H1 (cell line): ENCODE measurements at regions of chr9 and their contacts with region 1.

Region 1: DNA sequence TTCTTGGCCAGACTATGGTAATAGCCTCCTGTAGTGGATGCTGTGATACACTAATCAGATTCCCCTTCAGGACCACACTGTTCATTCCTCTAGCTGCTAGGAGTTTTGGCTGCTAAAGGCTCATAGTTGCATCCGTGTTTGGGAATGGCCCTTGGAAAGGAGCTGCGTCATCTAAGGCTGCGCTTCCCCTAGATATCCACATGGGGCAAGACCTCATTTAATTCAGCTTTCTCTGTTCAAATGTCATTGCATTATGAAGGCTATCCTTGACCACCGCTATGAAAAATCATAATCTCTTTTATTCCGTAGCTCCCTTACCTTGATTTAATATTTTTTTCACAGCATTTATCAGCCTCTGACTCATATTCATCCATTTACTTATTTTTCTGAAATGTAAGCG is 258.3 kb upstream of the NR4A3 start:
- DNase-seq: no peak
- H3K4me3 ChIP-seq: no peak overlapping the region
- H3K27ac ChIP-seq: no peak overlapping the region
- H3K4me1 ChIP-seq: no peaks in the 10 kb centered on the region
- H3K27me3 ChIP-seq: no peaks in the 10 kb centered on the region
- CTCF ChIP-seq: peak in 2 of 3 experiments; percentile 2 to 28; a peak in 2 of 4 replicates
- EP300 ChIP-seq: no peak
- POLR2A ChIP-seq: no peak
- RAD21 ChIP-seq: peak in 1 of 2 experiments; percentile 26; a peak in 2 of 4 replicates

Region 2: DNA sequence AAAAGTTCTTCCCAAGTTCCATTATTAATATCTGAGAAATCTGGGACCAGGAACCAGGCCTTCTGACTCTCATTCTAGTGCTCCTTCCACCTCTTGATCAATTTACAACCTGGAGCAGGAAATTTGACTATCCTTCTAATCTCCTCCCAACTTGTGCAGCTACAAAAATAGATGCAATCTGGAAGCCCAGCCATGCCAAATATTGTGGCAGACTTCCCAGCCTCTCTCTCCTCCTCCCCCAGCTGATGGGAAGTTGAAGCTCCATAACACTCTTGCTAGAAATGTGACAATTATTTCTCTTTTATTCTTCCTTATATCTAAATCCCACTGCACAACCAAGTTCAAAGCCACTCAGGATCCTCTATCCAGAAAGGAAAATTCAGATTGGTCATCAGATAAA is 89.2 kb before region 1 on chr9:
- CTCF ChIA-PET with region 1: no interaction called
- POLR2A ChIA-PET with region 1: no interaction called
- DNase-seq: no peak
- H3K4me3 ChIP-seq: no peak overlapping the region
- H3K27ac ChIP-seq: no peak overlapping the region
- H3K4me1 ChIP-seq: peaks cover 0 to 5% (median 2%) of the 10 kb centered on the region in 4 experiments; a peak in 2 of 7 replicates
- H3K27me3 ChIP-seq: no peaks in the 10 kb centered on the region
- CTCF ChIP-seq: no peak
- EP300 ChIP-seq: no peak
- POLR2A ChIP-seq: no peak
- RAD21 ChIP-seq: no peak

Region 3: DNA sequence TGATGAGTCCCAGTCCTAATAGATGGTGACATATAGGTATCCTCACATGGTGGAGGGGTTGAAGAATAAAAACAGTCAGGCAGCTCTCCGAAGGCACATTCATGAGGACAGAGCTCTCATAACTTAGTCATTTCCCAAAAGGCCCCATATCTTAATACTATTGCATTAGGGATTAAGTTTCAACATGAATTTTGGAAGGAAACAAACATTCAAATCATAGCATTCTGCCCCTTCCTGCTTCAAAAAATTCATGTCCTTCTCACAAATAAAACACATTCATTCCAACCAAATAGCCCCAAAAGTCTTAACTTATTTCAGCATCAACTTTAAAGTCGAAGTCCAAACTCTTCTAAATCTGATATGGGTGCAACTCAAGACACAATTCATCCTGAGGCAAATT is 18.8 kb before region 1 on chr9:
- CTCF ChIA-PET with region 1: interaction called, 11 read pairs
- POLR2A ChIA-PET with region 1: no interaction called
- DNase-seq: no peak
- H3K4me3 ChIP-seq: no peak overlapping the region
- H3K27ac ChIP-seq: no peak overlapping the region
- H3K4me1 ChIP-seq: no peaks in the 10 kb centered on the region
- H3K27me3 ChIP-seq: no peaks in the 10 kb centered on the region
- CTCF ChIP-seq: no peak
- EP300 ChIP-seq: no peak
- POLR2A ChIP-seq: no peak
- RAD21 ChIP-seq: no peak

Region 4: DNA sequence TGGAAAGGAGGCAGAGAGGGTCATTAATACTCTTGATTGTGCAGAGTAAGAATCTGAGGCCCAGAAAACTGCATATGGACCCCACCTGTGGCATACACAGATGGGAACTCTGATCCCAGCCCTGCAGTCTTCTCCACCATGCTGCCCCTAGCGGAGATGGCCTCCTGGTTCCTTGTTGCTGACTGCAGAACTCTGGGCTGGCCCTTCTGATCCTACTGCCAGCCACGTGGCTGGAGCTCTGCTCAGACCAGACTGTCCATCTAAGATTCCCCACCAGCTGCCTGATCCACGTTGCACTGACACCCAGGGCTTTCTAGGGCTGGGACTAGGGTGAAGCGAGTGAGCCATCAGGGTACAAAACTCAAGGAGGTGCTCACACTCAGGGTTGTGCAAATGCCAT is 12.6 kb after region 1 on chr9:
- CTCF ChIA-PET with region 1: interaction called, 21 read pairs
- POLR2A ChIA-PET with region 1: interaction called, 3 read pairs
- DNase-seq: no peak
- H3K4me3 ChIP-seq: no peak overlapping the region
- H3K27ac ChIP-seq: no peak overlapping the region
- H3K4me1 ChIP-seq: no peaks in the 10 kb centered on the region
- H3K27me3 ChIP-seq: no peaks in the 10 kb centered on the region
- CTCF ChIP-seq: peak in 2 of 3 experiments; percentile 10 to 22; a peak in 2 of 4 replicates
- EP300 ChIP-seq: no peak
- POLR2A ChIP-seq: no peak
- RAD21 ChIP-seq: peak in 1 of 2 experiments; percentile 27; a peak in 1 of 4 replicates

Region 5: GRCh38 chr9:99693888-99694287 is 130.5 kb after region 1 on chr9:
- CTCF ChIA-PET with region 1: no interaction called
- POLR2A ChIA-PET with region 1: no interaction called
- DNase-seq: no peak
- H3K4me3 ChIP-seq: no peak overlapping the region
- H3K27ac ChIP-seq: no peak overlapping the region
- H3K4me1 ChIP-seq: no peaks in the 10 kb centered on the region
- H3K27me3 ChIP-seq: no peaks in the 10 kb centered on the region
- CTCF ChIP-seq: no peak
- EP300 ChIP-seq: no peak
- POLR2A ChIP-seq: no peak
- RAD21 ChIP-seq: no peak

Region 6: GRCh38 chr9:99851500-99851822 is 288.1 kb after region 1 on chr9:
- CTCF ChIA-PET with region 1: no interaction called
- POLR2A ChIA-PET with region 1: no interaction called
- DNase-seq: no peak
- H3K4me3 ChIP-seq: no peak overlapping the region
- H3K27ac ChIP-seq: no peak overlapping the region
- H3K4me1 ChIP-seq: no peaks in the 10 kb centered on the region
- H3K27me3 ChIP-seq: no peaks in the 10 kb centered on the region
- CTCF ChIP-seq: no peak
- EP300 ChIP-seq: no peak
- POLR2A ChIP-seq: no peak
- RAD21 ChIP-seq: no peak